Activated naive CD4-positive, alpha-beta T cell treated with anti-CD3 and anti-CD28 coated beads for 36 hours (primary cell): ENCODE measurements at regions of chr7 and their contacts with region 1.

Region 1: GRCh38 chr7:85750454-85750949 is 563.6 kb upstream of the SEMA3D start:
- DNase-seq: peak; percentile 50
- H3K4me3 Mint-ChIP-seq: no peak overlapping the region
- H3K27ac Mint-ChIP-seq: no peak overlapping the region
- H3K4me1 Mint-ChIP-seq: no peaks in the 10 kb centered on the region
- H3K27me3 Mint-ChIP-seq: no peaks in the 10 kb centered on the region

Region 2: GRCh38 chr7:85186521-85187241 is 563.8 kb before region 1 on chr7 and contains the start of gene SEMA3D:
- CTCF ChIA-PET with region 1: no interaction called
- intact Hi-C with region 1: loop called (anchors 10 kb)
- DNase-seq: peak; percentile 34
- H3K4me3 Mint-ChIP-seq: peak within 1 kb of the TSS; percentile 12
- H3K27ac Mint-ChIP-seq: no peak within 1 kb of the TSS
- H3K4me1 Mint-ChIP-seq: peaks cover 4% of the 10 kb centered on the region
- H3K27me3 Mint-ChIP-seq: peaks cover 46% of the 10 kb centered on the region
- total RNA-seq, gene SEMA3D: not detected

Region 3: GRCh38 chr7:85554236-85555178 is 196.0 kb before region 1 on chr7:
- CTCF ChIA-PET with region 1: no interaction called
- intact Hi-C with region 1: loop called (anchors 1 kb)
- DNase-seq: peak; percentile 8
- H3K4me3 Mint-ChIP-seq: no peak overlapping the region
- H3K27ac Mint-ChIP-seq: no peak overlapping the region
- H3K4me1 Mint-ChIP-seq: no peaks in the 10 kb centered on the region
- H3K27me3 Mint-ChIP-seq: no peaks in the 10 kb centered on the region